BJ (cell line): ENCODE measurements at regions of chr4 and their contacts with region 1.

Region 1: DNA sequence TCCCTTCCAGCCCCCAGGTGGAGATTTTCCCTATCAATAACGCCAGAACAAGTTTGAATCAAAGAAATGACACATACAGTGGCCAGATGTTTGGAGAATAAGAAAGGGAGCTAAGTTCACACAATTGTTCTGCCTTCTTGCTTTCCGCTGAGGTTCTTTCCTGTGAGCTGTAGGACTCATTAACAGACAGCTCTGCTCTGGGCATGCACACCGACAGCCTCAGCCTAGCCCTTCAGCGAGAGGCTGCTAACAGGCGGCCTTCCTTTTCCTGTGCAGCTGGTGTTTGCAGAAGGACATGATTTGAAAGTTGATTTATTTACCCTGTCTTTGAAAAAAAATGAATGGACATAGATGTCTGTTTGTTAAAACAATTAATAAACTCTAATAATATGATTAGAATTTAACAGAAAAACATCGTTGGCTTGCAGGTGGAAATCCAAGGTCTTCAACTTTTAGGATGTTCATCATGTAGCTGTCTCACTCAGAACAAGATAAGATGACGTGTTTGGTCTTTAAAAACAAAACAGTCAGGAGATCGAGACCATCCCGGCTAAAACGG is 183.3 kb downstream of the KDR start:
- DNase-seq: no peak
- H3K4me3 ChIP-seq: no peak overlapping the region
- H3K27me3 ChIP-seq: no peaks in the 10 kb centered on the region
- CTCF ChIP-seq: no peak

Region 2: DNA sequence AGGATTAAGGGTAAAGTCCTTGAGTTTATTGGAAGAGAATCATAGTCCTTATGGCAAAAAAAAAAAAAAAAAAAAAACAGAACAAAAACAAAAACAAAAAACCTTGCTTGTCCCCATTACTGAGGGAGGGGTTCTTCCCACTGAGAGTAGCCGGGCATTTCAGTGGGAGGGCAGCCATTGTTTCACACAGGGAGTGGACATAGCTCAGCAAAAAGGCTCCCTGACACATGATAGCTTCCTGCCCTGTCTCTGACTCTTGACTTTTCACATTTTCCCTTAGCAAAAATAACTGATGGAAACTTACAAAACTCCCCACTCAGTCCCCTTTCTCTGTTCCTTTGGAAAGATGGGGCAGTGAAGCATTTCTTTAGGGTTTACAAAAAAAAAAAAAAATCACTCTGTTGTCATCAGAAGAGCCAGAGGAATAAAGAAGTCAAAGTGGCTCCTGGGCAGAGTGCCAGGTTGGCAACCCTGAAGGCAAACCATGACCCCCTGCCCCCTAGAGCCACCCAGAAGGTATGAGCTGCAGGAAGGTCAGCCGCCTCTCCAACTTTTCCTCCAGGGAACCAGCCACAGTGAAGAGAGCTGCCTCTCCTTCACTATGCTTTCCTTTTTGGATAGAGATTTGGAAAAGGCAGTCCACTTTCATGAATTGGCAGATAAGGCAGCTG is 12.7 kb after region 1 on chr4:
- CTCF ChIA-PET with region 1: interaction called, 3 read pairs
- POLR2A ChIA-PET with region 1: interaction called, 11 read pairs
- DNase-seq: no peak
- H3K4me3 ChIP-seq: no peak overlapping the region
- H3K27me3 ChIP-seq: no peaks in the 10 kb centered on the region
- CTCF ChIP-seq: no peak

Region 3: DNA sequence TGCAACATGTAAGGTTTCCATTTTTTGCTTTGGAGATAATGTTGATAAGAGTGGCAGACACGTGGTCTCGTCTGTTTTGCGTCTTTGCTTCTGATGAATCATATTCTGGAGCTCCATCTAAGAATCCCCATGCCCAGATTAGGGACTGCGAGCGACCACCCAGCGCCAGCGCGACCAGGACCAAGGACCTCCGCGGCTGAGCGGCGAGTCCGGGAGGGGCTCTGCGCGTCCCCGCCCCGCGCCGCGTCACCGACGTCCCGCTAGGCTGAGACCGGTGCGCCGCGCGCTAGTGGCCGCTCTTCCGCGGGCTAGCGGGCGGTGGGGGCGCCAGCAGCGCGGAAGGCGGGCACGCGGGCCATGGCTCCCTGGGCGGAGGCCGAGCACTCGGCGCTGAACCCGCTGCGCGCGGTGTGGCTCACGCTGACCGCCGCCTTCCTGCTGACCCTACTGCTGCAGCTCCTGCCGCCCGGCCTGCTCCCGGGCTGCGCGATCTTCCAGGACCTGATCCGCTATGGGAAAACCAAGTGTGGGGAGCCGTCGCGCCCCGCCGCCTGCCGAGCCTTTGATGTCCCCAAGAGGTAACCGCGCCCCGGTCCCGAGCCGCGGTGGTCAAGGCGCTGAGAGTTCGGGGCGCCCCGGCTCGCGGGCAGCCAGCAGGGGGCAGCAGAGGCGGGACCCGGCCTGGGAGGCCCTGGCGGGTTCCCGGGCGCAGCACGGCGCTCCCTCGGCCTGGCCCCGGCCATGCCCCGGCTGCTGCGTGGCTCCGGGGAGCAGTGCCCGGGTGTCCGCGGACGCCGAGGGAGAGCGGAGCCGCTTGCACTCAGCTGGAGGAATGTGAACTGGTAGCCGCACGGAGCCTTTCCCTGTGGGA is 404.1 kb after region 1 on chr4 and contains the start of gene SRD5A3:
- CTCF ChIA-PET with region 1: no interaction called
- POLR2A ChIA-PET with region 1: no interaction called
- DNase-seq: no peak
- H3K4me3 ChIP-seq: peak within 1 kb of the TSS; percentile 74
- H3K27me3 ChIP-seq: 0 out of 2 replicates have a peak, but pooled peaks cover 2% of the 10 kb centered on the region
- CTCF ChIP-seq: peak; percentile 65
- polyA plus RNA-seq, gene SRD5A3: 15.2 and 24.0 TPM in 2 replicates